HepG2 (cell line): ENCODE measurements at regions of chr2 and their contacts with region 1.

Region 1: DNA sequence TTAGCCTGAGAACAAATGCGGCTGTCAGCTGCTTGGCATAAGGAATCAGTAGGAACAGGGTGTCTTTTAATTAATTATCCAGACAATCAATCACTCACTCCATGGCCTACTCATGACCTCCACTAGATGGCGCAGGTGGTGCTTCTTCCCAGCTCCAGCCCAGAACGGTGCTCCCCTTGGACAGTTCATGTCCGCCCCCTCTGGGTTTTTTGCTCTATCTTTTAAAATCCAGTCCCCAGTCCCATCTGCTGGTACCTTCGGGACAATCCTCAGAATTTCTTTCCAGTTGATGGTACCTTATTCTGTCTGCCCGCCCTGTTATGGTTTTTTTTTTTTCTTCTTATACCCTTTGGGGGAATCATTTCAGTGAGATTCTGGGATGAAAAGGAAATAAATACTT is 99.8 kb downstream of the CACNB4 start:
- DNase-seq: peak; percentile 77
- ATAC-seq: peak; percentile 64
- H3K4me3 ChIP-seq: no peak overlapping the region
- H3K27ac ChIP-seq: no peak overlapping the region
- H3K4me1 ChIP-seq: peaks cover 55% of the 10 kb centered on the region
- H3K27me3 ChIP-seq: no peaks in the 10 kb centered on the region
- CTCF ChIP-seq: peak; percentile 85
- EP300 ChIP-seq: no peak
- POLR2A ChIP-seq: no peak
- RAD21 ChIP-seq: peak; percentile 86

Region 2: DNA sequence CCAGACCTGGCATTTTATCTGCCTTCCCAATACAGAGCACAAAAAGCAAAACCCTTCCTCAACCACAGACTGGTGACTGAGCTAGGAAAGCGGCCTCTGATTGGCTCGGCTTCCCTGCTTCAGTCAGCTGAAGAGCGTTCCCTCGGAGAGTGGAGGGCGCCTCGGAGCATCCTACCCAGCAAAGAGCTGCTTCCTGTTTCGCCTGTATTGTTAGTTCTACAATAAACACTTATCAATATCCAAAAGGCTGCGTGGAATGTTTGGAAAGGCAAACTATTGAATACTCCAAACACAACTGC is 25.2 kb before region 1 on chr2:
- CTCF ChIA-PET with region 1: no interaction called
- POLR2A ChIA-PET with region 1: interaction called, 20 read pairs
- in situ Hi-C with region 1: no loop called
- intact Hi-C with region 1: loop called (anchors 2 kb)
- DNase-seq: peak; percentile 66
- ATAC-seq: peak; percentile 89
- H3K4me3 ChIP-seq: peak overlapping the region; percentile 31 to 69 (median 65)
- H3K27ac ChIP-seq: peak overlapping the region; percentile 49
- H3K4me1 ChIP-seq: peaks cover 87% of the 10 kb centered on the region
- H3K27me3 ChIP-seq: no peaks in the 10 kb centered on the region
- CTCF ChIP-seq: peak; percentile 14; the same call in 1 of the 2 replicates
- EP300 ChIP-seq: no peak
- POLR2A ChIP-seq: no peak
- RAD21 ChIP-seq: no peak

Region 3: DNA sequence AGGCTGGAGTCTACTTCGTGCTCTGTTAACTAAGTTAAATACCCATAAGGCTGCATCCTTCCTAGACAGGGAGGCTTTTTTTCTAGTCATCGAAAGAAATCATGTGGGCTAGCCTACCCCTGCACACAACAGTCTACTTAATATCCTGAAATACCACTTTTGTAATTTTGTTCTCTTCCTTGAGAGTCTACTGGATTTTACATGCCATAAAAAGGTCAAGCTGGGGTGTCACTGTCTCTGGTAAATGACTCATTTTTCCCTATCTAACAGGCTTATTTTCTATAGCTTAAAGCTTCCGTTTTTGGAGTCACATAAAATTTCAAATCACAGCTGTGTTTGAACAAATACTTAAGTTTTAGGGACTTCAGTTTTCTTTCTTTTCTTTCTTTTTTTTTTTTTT is 187.2 kb after region 1 on chr2:
- CTCF ChIA-PET with region 1: no interaction called
- POLR2A ChIA-PET with region 1: no interaction called
- in situ Hi-C with region 1: no loop called
- intact Hi-C with region 1: no loop called
- DNase-seq: no peak
- ATAC-seq: no peak
- H3K4me3 ChIP-seq: no peak overlapping the region
- H3K27ac ChIP-seq: no peak overlapping the region
- H3K4me1 ChIP-seq: peaks cover 30% of the 10 kb centered on the region; the same call in 1 of the 2 replicates
- H3K27me3 ChIP-seq: peaks cover 0 to 2% of the 10 kb centered on the region in 2 experiments; a peak in 1 of 5 replicates
- CTCF ChIP-seq: no peak
- EP300 ChIP-seq: no peak
- POLR2A ChIP-seq: no peak
- RAD21 ChIP-seq: no peak